Activated naive CD4-positive, alpha-beta T cell treated with anti-CD3 and anti-CD28 coated beads for 36 hours (primary cell): ENCODE measurements at regions of chr7 and their contacts with region 1.

Region 1: GRCh38 chr7:137626469-137627067 is 220.2 kb downstream of the DGKI start:
- DNase-seq: peak; percentile 67
- H3K4me3 Mint-ChIP-seq: no peak overlapping the region
- H3K27ac Mint-ChIP-seq: no peak overlapping the region
- H3K4me1 Mint-ChIP-seq: no peaks in the 10 kb centered on the region
- H3K27me3 Mint-ChIP-seq: peaks cover 21% of the 10 kb centered on the region

Region 2: DNA sequence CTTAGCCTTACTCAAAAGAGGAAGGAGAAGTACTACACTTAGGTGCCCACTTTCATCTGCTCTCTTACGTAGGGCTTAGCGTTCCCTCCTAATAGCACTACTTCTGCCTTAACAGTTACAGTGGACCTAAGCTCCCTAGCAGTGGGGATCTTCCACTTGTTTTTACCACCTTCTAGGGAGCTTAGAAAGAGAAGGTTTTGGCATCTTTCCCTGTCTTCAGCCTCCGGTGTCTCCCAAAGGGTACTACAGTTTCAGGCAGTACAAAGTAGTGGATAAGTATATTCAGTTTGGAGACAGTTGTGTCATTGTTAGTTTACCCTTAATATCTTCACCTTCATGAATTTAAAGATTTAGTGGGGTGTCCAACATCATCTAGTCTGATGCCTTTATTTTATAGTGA is 743.5 kb before region 1 on chr7:
- CTCF ChIA-PET with region 1: no interaction called
- intact Hi-C with region 1: no loop called
- DNase-seq: no peak
- H3K4me3 Mint-ChIP-seq: no peak overlapping the region
- H3K27ac Mint-ChIP-seq: no peak overlapping the region
- H3K4me1 Mint-ChIP-seq: no peaks in the 10 kb centered on the region
- H3K27me3 Mint-ChIP-seq: no peaks in the 10 kb centered on the region

Region 3: DNA sequence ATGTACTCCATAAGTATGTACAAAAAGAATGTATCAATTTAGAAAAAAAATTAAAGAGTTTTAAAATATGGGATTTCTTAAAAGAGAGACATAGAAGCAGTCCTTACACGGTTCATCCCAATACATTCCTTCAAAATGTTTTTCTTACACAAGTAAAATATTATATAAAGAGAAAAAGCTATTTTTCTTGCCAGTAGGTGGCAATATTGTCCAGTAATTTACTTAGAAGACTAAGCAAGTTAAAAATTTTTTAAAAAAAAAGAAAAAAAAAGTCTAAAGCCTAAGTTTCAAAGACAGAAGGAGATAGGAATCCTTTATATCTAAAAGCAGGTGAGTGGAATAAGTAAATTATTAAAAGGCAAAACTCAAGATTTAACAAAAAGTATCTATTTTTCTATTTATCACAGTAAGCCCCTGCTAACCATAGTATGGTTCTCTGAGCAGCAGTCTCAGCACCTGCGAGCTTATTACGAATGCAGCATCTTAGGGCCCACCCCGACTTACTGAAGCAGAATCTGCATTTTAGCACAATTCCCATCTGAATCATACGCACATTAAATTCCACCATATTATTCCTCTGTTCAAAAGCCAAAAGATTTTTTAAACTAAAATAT is 20.4 kb before region 1 on chr7:
- CTCF ChIA-PET with region 1: interaction called, 11 read pairs
- intact Hi-C with region 1: loop called (anchors 1 kb)
- DNase-seq: no peak
- H3K4me3 Mint-ChIP-seq: no peak overlapping the region
- H3K27ac Mint-ChIP-seq: no peak overlapping the region
- H3K4me1 Mint-ChIP-seq: no peaks in the 10 kb centered on the region
- H3K27me3 Mint-ChIP-seq: peaks cover 5% of the 10 kb centered on the region